ENCODE measurements at regions of chr3 and their contacts with region 1.

Region 1: DNA sequence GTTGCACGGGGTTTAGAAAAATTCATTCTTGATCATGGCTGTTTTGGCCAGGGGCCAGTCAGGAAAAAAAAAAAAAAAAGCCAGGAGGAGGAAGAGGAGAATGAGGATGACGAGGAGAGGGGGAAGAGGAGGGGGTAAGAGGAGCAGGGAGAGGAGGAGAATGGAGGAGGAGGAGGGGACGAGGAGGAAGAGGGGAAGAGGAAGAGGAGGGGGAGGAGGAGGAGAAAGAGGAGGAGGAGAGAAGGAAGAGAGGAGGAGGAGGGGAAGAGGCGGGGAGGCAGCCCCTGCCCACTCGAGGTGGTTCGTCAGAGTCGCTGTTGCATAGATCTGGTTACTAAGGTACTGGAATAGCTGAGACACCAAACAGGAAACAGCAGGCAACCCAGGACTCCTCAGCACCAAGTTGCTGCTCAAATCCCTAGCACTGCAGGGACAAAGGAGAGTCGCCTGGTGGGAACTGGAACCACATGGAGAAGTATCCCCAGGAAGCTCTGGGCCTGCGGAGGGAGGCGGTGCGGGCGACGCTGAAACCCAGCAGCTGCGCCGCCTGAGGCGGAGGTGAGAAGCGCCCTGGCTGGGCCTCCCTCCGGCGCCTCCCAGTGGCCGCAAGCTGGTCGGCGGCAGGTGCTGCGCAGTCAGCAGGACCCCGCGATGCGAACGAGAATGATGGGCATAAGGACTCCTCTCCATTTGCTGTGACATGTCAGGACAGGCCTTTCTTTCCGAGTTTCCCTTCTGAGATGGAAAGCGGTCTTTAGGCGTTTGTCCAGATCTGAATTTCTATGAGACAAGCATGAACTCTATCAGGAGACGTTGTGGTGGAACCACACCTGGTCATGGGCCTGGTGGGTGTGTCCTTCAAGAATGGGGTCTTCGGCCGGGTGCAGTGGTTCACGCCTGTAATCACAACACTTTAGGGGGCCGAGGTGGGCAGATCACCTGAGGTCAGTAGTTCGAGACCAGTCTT is 17.5 kb downstream of the FAM240A start:
- DNase-seq: peak; percentile 83 to 89
- H3K4me3 ChIP-seq: peak overlapping the region in 3 of 4 experiments; percentile 4 to 47 (median 15); a peak in 4 of 8 replicates
- H3K27ac ChIP-seq: 0 out of 2 replicates have a peak overlapping the region, but pooled peaks have one; percentile 20
- H3K4me1 ChIP-seq: peaks cover 6 to 17% (median 8%) of the 10 kb centered on the region in 4 experiments; a peak in 6 of 7 replicates
- H3K27me3 ChIP-seq: no peaks in the 10 kb centered on the region
- CTCF ChIP-seq: peak; percentile 98 to 100 (median 99)
- EP300 ChIP-seq: no peak; a peak in 1 of 3 replicates
- POLR2A ChIP-seq: no peak
- RAD21 ChIP-seq: peak; percentile 75 to 89

Region 2: GRCh38 chr3:46496741-46497554 is 132.9 kb before region 1 on chr3:
- CTCF ChIA-PET with region 1: interaction called, 31 read pairs
- POLR2A ChIA-PET with region 1: no interaction called
- DNase-seq: peak; percentile 36 to 75
- H3K4me3 ChIP-seq: no peak overlapping the region
- H3K27ac ChIP-seq: no peak overlapping the region
- H3K4me1 ChIP-seq: peaks cover 0 to 7% (median 1%) of the 10 kb centered on the region in 4 experiments; a peak in 2 of 7 replicates
- H3K27me3 ChIP-seq: peaks cover 0 to 4% (median 0%) of the 10 kb centered on the region in 4 experiments; a peak in 1 of 7 replicates
- CTCF ChIP-seq: peak; percentile 41 to 68 (median 60)
- EP300 ChIP-seq: no peak
- POLR2A ChIP-seq: no peak
- RAD21 ChIP-seq: peak; percentile 58 to 69

Region 3: GRCh38 chr3:46585799-46586693 is 43.8 kb before region 1 on chr3:
- CTCF ChIA-PET with region 1: interaction called, 35 read pairs
- POLR2A ChIA-PET with region 1: interaction called, 64 read pairs
- DNase-seq: no peak
- H3K4me3 ChIP-seq: no peak overlapping the region
- H3K27ac ChIP-seq: no peak overlapping the region
- H3K4me1 ChIP-seq: peaks cover 0 to under 1% (median 0%) of the 10 kb centered on the region in 4 experiments; a peak in 1 of 7 replicates
- H3K27me3 ChIP-seq: no peaks in the 10 kb centered on the region
- CTCF ChIP-seq: no peak
- EP300 ChIP-seq: no peak
- POLR2A ChIP-seq: peak in 1 of 2 experiments; percentile 46; a peak in 1 of 3 replicates
- RAD21 ChIP-seq: no peak

Region 4: DNA sequence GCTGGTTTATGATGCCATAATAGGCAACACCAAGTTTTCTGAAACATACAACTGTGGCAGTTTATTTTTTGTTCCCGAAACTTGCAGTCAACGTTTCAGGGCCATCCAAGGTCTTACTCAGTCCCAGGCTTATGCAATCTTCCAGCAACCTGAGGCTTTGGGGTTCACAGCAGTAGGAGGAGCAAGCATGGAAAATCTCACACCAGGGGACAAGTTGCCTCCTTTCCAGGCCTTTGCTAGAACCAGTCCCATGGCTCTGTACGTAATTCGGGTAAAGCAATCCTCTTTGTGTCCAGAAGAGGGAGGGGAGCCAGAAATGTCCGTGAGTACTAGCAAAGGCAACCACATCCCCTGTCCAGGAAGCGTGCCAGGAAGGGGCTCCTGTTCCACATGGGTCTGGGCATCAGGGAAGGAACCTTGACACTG is 22.2 kb before region 1 on chr3:
- CTCF ChIA-PET with region 1: interaction called, 56 read pairs
- POLR2A ChIA-PET with region 1: interaction called, 5 read pairs
- DNase-seq: peak in 1 of 2 experiments; percentile 58
- H3K4me3 ChIP-seq: no peak overlapping the region
- H3K27ac ChIP-seq: no peak overlapping the region
- H3K4me1 ChIP-seq: peaks cover 3 to 23% (median 9%) of the 10 kb centered on the region in 4 experiments
- H3K27me3 ChIP-seq: no peaks in the 10 kb centered on the region
- CTCF ChIP-seq: peak; percentile 31 to 72 (median 68)
- EP300 ChIP-seq: no peak
- POLR2A ChIP-seq: no peak
- RAD21 ChIP-seq: peak; percentile 49 to 68

Region 5: DNA sequence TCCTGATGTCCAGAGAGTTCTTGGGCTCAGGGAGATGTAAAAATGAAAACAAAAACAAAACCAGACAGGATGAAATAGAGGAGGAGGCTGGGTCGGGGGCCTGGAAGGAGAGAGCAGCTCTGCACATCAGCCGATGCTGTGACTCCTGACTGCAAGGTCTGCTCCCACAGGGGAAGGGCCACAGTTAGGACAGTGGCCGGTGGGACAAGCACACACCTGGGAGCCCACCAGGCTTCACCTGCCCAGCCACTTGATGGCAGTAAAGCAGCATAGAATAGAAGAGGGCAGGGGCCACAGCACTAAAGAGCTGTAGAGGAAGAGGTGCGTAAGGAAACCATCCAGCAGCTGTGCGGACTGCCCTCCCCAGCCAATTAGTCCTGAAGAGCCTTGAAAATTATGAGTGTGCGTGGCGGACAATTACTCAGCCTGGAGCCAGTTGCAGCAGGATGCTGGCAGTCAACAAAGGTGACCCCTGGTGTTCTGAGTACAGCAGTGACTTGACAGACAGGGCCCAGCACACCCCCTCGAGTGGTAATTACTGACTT is 33.8 kb after region 1 on chr3:
- CTCF ChIA-PET with region 1: interaction called, 11 read pairs
- POLR2A ChIA-PET with region 1: interaction called, 3 read pairs
- DNase-seq: peak in 1 of 2 experiments; percentile 62
- H3K4me3 ChIP-seq: no peak overlapping the region
- H3K27ac ChIP-seq: no peak overlapping the region
- H3K4me1 ChIP-seq: peaks cover 22 to 41% (median 28%) of the 10 kb centered on the region in 4 experiments
- H3K27me3 ChIP-seq: no peaks in the 10 kb centered on the region; a peak in 1 of 7 replicates
- CTCF ChIP-seq: peak in 2 of 3 experiments; percentile 63 to 70; a peak in 3 of 4 replicates
- EP300 ChIP-seq: no peak
- POLR2A ChIP-seq: no peak
- RAD21 ChIP-seq: peak; percentile 72 to 83

Measured in H1 (cell line).